MCF 10A (cell line): ENCODE measurements at regions of chr2 and their contacts with region 1.

Region 1: GRCh38 chr2:195664528-195664927 is 7.5 kb downstream of the SLC39A10 start:
- DNase-seq: no peak
- H3K4me3 Mint-ChIP-seq: no peak overlapping the region
- H3K27ac Mint-ChIP-seq: no peak overlapping the region
- H3K4me1 Mint-ChIP-seq: peaks cover 11% of the 10 kb centered on the region
- H3K27me3 Mint-ChIP-seq: no peaks in the 10 kb centered on the region
- CTCF ChIP-seq: peak; percentile 12

Region 2: DNA sequence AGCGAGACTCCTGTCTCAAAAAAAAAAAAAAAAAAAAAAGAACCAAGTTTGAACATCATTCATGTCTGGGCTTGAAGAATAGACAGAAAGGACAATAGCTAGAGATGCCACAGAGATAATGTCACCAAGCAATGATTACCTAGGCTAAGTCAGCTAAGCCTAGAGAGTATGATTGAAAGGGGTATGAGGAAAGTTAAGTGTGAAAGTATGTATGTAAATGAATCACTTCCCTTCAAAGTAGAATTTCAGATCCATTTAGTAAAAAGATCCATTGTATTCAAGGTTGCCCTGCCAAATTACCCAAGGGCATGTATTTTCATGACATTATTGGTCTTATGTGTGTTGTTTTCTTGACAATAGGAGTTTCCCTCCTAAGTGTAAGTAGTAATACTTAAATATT is 41.6 kb before region 1 on chr2:
- CTCF ChIA-PET with region 1: no interaction called
- POLR2A ChIA-PET with region 1: no interaction called
- intact Hi-C with region 1: no loop called
- DNase-seq: peak; percentile 29
- H3K4me3 Mint-ChIP-seq: no peak overlapping the region
- H3K27ac Mint-ChIP-seq: peak overlapping the region; percentile 62
- H3K4me1 Mint-ChIP-seq: no peaks in the 10 kb centered on the region
- H3K27me3 Mint-ChIP-seq: no peaks in the 10 kb centered on the region
- CTCF ChIP-seq: no peak

Region 3: GRCh38 chr2:195636890-195637289 is 27.6 kb before region 1 on chr2:
- CTCF ChIA-PET with region 1: no interaction called
- POLR2A ChIA-PET with region 1: no interaction called
- intact Hi-C with region 1: no loop called
- DNase-seq: peak; percentile 16
- H3K4me3 Mint-ChIP-seq: no peak overlapping the region
- H3K27ac Mint-ChIP-seq: no peak overlapping the region
- H3K4me1 Mint-ChIP-seq: no peaks in the 10 kb centered on the region
- H3K27me3 Mint-ChIP-seq: no peaks in the 10 kb centered on the region
- CTCF ChIP-seq: no peak

Region 4: DNA sequence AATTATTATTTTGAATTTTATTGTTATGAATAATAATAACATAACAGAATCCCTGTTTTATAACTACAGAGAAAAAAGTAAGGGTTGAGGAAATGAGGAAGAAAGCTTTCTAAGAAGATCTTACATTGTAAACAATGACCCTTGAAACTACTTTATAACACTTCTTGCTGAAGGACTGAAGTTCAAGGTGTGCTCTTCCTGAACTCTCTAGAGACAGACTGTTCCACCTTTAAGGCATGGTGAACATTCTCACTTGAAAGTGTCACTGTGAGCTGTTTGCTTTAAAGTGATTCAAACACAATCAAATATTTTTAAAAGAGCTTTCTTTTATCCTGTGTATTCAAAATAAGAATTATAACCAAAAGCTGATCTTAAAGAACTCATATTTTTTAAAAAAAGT is 272.6 kb after region 1 on chr2:
- CTCF ChIA-PET with region 1: interaction called, 19 read pairs
- POLR2A ChIA-PET with region 1: interaction called, 4 read pairs
- intact Hi-C with region 1: loop called (anchors 1 kb)
- DNase-seq: no peak
- H3K4me3 Mint-ChIP-seq: no peak overlapping the region
- H3K27ac Mint-ChIP-seq: no peak overlapping the region
- H3K4me1 Mint-ChIP-seq: no peaks in the 10 kb centered on the region
- H3K27me3 Mint-ChIP-seq: no peaks in the 10 kb centered on the region
- CTCF ChIP-seq: no peak